ENCODE measurements at regions of chr17 and their contacts with region 1.

Region 1: DNA sequence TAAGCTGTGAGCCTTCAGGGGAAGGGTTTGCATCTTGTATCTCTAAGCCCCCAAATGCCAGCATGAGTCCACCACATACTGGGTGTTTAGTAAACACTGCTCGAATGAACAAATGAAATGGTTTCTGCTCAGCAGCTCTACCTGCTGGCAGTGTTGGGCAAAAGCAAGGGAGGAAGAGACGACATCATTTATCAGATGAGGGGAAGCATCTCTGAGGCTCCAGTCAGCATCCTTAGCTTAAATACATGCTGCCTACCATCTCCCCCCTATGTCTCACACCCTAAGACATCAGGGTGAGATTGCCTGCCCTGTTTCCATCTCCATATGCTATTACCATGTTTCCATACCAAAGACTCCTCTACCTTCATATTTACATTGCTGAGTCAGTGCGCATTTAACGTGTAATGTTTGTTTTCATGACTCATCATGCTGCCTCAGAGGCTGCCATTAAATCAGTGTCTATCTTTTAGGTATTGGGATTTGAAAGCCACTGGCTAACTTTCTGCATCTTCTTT is 379.8 kb downstream of the UTP18 start:
- DNase-seq: peak; percentile 16
- ATAC-seq: peak; percentile 64; the same call in 2 of the 3 replicates
- H3K4me3 ChIP-seq: no peak overlapping the region
- H3K27ac ChIP-seq: no peak overlapping the region
- H3K4me1 ChIP-seq: no peaks in the 10 kb centered on the region
- H3K27me3 ChIP-seq: peaks cover 0 to 3% of the 10 kb centered on the region in 2 experiments; a peak in 1 of 5 replicates
- CTCF ChIP-seq: peak; percentile 54
- EP300 ChIP-seq: no peak
- POLR2A ChIP-seq: no peak
- RAD21 ChIP-seq: no peak

Region 2: GRCh38 chr17:51585514-51586104 is 54.6 kb before region 1 on chr17:
- CTCF ChIA-PET with region 1: interaction called, 10 read pairs
- POLR2A ChIA-PET with region 1: no interaction called
- in situ Hi-C with region 1: no loop called
- intact Hi-C with region 1: loop called (anchors 1 kb)
- DNase-seq: peak; percentile 30
- ATAC-seq: peak; percentile 90
- H3K4me3 ChIP-seq: no peak overlapping the region
- H3K27ac ChIP-seq: no peak overlapping the region
- H3K4me1 ChIP-seq: no peaks in the 10 kb centered on the region
- H3K27me3 ChIP-seq: no peaks in the 10 kb centered on the region
- CTCF ChIP-seq: peak; percentile 80
- EP300 ChIP-seq: no peak
- POLR2A ChIP-seq: no peak
- RAD21 ChIP-seq: peak; percentile 57